ENCODE measurements at regions of chr9 and their contacts with region 1.

Region 1: DNA sequence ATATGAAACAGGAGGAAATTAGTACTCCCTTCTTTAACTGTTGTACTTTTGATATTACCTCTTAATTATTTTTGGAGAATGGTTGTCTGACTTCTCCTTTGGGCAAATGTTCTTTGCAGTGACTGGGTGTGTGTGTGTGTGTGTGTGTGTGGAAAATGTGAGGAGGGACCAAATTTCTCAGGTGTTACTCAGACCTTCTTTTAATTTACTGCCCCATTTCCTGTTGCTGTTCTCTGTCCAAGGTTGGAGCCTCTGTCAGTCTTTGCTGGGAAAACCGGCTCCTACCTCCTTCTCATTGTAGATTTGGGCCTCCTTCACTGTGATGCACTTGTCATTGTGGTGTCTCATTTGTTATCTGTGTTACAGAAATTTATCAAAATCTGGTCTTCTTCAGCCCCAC is 68.4 kb downstream of the PBX3 start:
- DNase-seq: no peak
- H3K4me3 ChIP-seq: no peak overlapping the region
- H3K27ac ChIP-seq: no peak overlapping the region
- H3K4me1 ChIP-seq: peaks cover 0 to 1% (median 0%) of the 10 kb centered on the region in 4 donors
- H3K27me3 ChIP-seq: no peaks in the 10 kb centered on the region
- CTCF ChIP-seq: no peak
- EP300 ChIP-seq: no peak
- POLR2A ChIP-seq: no peak

Region 2: GRCh38 chr9:125746017-125746773 is 69.4 kb before region 1 on chr9:
- in situ Hi-C with region 1: no loop called
- intact Hi-C with region 1: loop called (anchors 5 kb)
- DNase-seq: peak; percentile 96
- H3K4me3 ChIP-seq: peak overlapping the region; percentile 23 to 88 (median 60)
- H3K27ac ChIP-seq: peak overlapping the region; percentile 78 to 94 (median 88)
- H3K4me1 ChIP-seq: peaks cover 0 to 29% (median 7%) of the 10 kb centered on the region in 4 donors
- H3K27me3 ChIP-seq: no peaks in the 10 kb centered on the region
- CTCF ChIP-seq: no peak
- EP300 ChIP-seq: no peak
- POLR2A ChIP-seq: no peak

Region 3: GRCh38 chr9:125867751-125868415 is 52.3 kb after region 1 on chr9:
- in situ Hi-C with region 1: no loop called
- intact Hi-C with region 1: no loop called
- DNase-seq: no peak
- H3K4me3 ChIP-seq: no peak overlapping the region
- H3K27ac ChIP-seq: no peak overlapping the region
- H3K4me1 ChIP-seq: peaks cover 0 to 4% (median 0%) of the 10 kb centered on the region in 4 donors
- H3K27me3 ChIP-seq: no peaks in the 10 kb centered on the region
- CTCF ChIP-seq: no peak
- EP300 ChIP-seq: no peak
- POLR2A ChIP-seq: no peak

Region 4: GRCh38 chr9:126440940-126441339 is 625.4 kb after region 1 on chr9:
- in situ Hi-C with region 1: no loop called
- intact Hi-C with region 1: no loop called
- DNase-seq: no peak
- H3K4me3 ChIP-seq: no peak overlapping the region
- H3K27ac ChIP-seq: no peak overlapping the region
- H3K4me1 ChIP-seq: no peaks in the 10 kb centered on the region
- H3K27me3 ChIP-seq: no peaks in the 10 kb centered on the region
- CTCF ChIP-seq: no peak
- EP300 ChIP-seq: no peak
- POLR2A ChIP-seq: no peak

Measured in transverse colon (tissue), 4 donors.